ENCODE measurements at regions of chr10 and their contacts with region 1.

Region 1: GRCh38 chr10:45235798-45236231 is 79.6 kb downstream of the OR13A1 start:
- DNase-seq: no peak
- ATAC-seq: no peak
- H3K4me3 Mint-ChIP-seq: no peak overlapping the region
- H3K27ac Mint-ChIP-seq: no peak overlapping the region
- H3K4me1 Mint-ChIP-seq: peaks cover 7% of the 10 kb centered on the region
- H3K27me3 Mint-ChIP-seq: peaks cover 4% of the 10 kb centered on the region
- CTCF ChIP-seq: no peak

Region 2: DNA sequence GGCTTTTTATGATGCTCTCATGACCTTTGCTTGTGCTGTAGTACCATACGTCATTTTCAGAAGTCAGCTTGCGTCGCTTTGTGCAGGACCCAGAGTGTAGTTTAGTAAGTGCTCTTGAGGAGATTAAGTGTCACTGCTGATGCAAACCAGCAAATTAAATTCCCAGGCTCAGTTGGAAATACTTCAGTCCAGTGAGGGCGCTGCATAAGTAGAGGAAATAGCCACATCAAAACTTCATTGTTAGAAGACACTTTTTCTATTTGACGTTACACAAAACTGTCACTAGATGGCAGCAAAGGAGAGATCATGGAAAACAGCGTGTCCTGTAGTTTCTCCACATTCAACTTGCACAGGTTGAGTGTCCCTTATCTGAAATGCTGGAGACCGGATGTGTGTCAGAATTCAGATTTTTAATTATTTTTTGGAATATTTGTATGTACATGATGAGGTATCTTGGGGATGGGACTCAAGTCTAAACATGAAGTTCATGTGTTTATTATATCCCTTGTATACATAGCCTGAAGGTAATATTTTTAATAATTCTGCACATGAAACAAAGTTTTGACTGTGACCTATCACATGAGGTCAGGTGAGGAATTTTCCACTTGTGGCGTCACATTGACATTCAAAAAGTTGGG is 227.2 kb before region 1 on chr10:
- CTCF ChIA-PET with region 1: interaction called, 4 read pairs
- POLR2A ChIA-PET with region 1: no interaction called
- intact Hi-C with region 1: loop called (anchors 10 kb)
- DNase-seq: peak; percentile 31
- ATAC-seq: peak; percentile 82
- H3K4me3 Mint-ChIP-seq: no peak overlapping the region
- H3K27ac Mint-ChIP-seq: no peak overlapping the region
- H3K4me1 Mint-ChIP-seq: peaks cover 6% of the 10 kb centered on the region
- H3K27me3 Mint-ChIP-seq: no peaks in the 10 kb centered on the region
- CTCF ChIP-seq: peak; percentile 80

Region 3: DNA sequence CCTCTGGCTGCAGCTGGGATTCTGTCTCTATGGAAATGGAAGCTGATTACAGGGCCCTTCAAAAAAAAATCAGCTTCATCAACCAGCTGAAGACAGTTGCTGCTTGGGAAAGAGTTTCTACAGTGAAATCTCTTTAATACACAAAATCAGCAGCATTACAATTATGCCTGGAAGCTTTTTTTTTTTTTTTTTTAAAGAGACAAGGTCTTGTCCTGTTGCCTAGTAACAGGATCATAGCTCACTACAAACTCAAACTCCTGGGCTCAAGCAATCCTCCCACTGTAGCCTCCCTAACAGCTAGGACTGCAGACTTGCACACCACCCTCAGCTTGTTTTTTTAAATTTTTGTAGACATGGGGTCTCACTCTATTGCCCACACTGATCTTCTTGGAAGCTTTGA is 14.9 kb before region 1 on chr10:
- CTCF ChIA-PET with region 1: interaction called, 14 read pairs
- POLR2A ChIA-PET with region 1: interaction called, 3 read pairs
- intact Hi-C with region 1: no loop called
- DNase-seq: no peak
- ATAC-seq: no peak
- H3K4me3 Mint-ChIP-seq: no peak overlapping the region
- H3K27ac Mint-ChIP-seq: no peak overlapping the region
- H3K4me1 Mint-ChIP-seq: no peaks in the 10 kb centered on the region
- H3K27me3 Mint-ChIP-seq: peaks cover 1% of the 10 kb centered on the region
- CTCF ChIP-seq: no peak

Measured in activated CD8-positive, alpha-beta T cell treated with anti-CD3 and anti-CD28 coated beads for 36 hours (primary cell).